ENCODE measurements at regions of chr20 and their contacts with region 1.

Region 1: GRCh38 chr20:33450867-33451266 is 7.3 kb upstream of the SNTA1 start:
- DNase-seq: no peak
- H3K4me3 ChIP-seq: no peak overlapping the region
- H3K27ac ChIP-seq: no peak overlapping the region
- H3K4me1 ChIP-seq: no peaks in the 10 kb centered on the region
- H3K27me3 ChIP-seq: no peaks in the 10 kb centered on the region
- CTCF ChIP-seq: no peak

Region 2: DNA sequence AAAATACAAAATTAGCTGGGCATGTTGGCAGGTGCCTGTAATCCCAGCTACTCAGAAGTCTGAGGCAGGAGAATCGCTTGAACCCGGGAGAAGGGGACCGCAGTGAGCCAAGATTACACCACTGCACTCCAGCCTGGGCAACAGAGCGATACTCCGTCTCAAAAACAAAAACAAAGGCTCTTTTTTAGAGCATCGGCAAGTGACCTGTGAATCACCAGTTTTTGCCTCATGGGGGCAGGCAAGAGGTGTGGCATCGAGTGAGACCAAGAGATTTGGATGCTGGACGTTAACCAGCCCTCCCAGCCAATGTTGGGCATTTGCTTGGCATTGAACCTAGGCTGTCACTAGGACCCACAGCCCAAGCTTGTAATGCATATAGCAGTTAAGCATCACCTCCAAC is 34.9 kb before region 1 on chr20:
- intact Hi-C with region 1: loop called (anchors 5 kb)
- DNase-seq: peak in 1 of 2 donors; percentile 75
- H3K4me3 ChIP-seq: no peak overlapping the region
- H3K27ac ChIP-seq: no peak overlapping the region
- H3K4me1 ChIP-seq: peaks cover 2 to 14% of the 10 kb centered on the region in 2 donors
- H3K27me3 ChIP-seq: no peaks in the 10 kb centered on the region
- CTCF ChIP-seq: peak; percentile 48 to 77 (median 66)

Measured in ascending aorta (tissue), 2 donors.